Heart right ventricle (tissue), 16 donors: ENCODE measurements at regions of chr19 and their contacts with region 1.

Region 1: GRCh38 chr19:18388100-18388959 is 2.4 kb downstream of the GDF15 start:
- DNase-seq: peak; percentile 79 to 88
- ATAC-seq: peak; percentile 82 to 91 (median 90)
- H3K4me3 ChIP-seq: peak overlapping the region in 9 of 10 donors; percentile 17 to 52 (median 38)
- H3K27ac ChIP-seq: peak overlapping the region in 8 of 10 donors; percentile 9 to 73 (median 56)
- H3K4me1 ChIP-seq: peaks cover 0 to 46% (median 16%) of the 10 kb centered on the region in 9 donors
- H3K27me3 ChIP-seq: peaks cover 0 to 16% (median 0%) of the 10 kb centered on the region in 7 donors
- CTCF ChIP-seq: peak; percentile 97 to 100 (median 100)

Region 2: GRCh38 chr19:18340190-18340989 is 47.9 kb before region 1 on chr19 and contains the start of gene PGPEP1:
- intact Hi-C with region 1: loop called in 1 of 10 experiments (anchors 5 kb)
- DNase-seq: peak; percentile 82
- ATAC-seq: peak; percentile 77 to 90 (median 86)
- H3K4me3 ChIP-seq: peak within 1 kb of the TSS; percentile 63 to 97 (median 90)
- H3K27ac ChIP-seq: peak within 1 kb of the TSS; percentile 32 to 91 (median 85)
- H3K4me1 ChIP-seq: peaks cover 10 to 37% (median 21%) of the 10 kb centered on the region in 9 donors
- H3K27me3 ChIP-seq: no peaks in the 10 kb centered on the region
- CTCF ChIP-seq: no peak
- total RNA-seq, gene PGPEP1: 36.0 to 61.3 (median 46.8) TPM

Region 3: DNA sequence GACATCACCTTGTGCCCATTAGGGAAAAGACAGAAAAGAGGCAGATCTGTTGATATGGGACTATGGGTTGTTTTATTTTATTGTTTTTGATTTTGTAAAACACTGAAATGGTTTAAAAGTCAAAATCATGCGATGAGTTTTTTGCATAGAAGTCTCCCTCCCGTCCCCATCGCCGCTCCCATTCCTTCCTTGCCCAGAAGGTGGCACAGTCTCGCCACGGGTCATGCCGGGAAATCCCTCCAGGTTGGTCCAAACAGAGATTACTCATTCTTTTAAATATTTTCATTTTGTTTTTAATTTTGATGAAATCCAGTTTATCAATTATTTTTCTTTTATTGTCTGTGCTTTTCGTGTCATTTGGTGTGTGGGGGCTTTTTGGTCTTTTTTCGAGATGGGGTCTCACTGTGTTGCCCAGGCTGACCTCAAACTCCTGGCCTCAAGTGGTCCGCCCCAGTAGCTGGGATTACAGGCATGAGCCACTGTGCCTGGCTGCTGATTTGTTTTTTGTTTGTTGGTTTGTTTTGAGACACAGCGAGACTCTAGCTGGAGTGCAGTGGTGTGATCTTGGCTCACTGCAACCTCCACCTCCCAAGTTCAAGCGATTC is 38.7 kb before region 1 on chr19:
- intact Hi-C with region 1: loop called in 4 of 10 experiments (anchors 5 kb)
- DNase-seq: peak; percentile 48
- ATAC-seq: peak in 6 of 8 donors; percentile 53 to 71 (median 64)
- H3K4me3 ChIP-seq: no peak overlapping the region
- H3K27ac ChIP-seq: no peak overlapping the region
- H3K4me1 ChIP-seq: no peaks in the 10 kb centered on the region
- H3K27me3 ChIP-seq: no peaks in the 10 kb centered on the region
- CTCF ChIP-seq: peak; percentile 50 to 86 (median 76)

Region 4: DNA sequence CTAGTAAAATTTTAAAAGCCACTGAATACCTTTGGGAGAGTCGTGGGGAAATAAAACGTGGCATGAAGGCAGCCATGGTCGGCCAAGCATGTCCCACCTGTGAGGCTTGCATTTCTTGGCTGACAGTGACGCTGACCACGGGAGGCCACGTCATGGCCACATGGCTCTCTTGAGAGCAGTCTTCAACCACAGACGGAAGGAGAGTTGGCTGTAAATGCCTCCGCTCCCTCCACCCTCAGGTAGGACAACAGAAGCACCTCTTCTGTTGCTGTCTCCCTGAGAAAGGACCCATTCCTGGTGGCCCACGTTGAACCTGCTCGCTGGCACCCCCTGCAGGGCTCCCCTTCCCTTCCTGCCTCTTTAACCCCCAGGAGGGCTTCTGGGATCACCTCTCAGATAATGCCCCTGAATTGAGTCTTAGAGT is 19.7 kb after region 1 on chr19:
- intact Hi-C with region 1: loop called in 3 of 10 experiments (anchors 1 to 2 kb)
- DNase-seq: peak; percentile 8 to 58
- ATAC-seq: peak in 2 of 8 donors; percentile 24 to 46
- H3K4me3 ChIP-seq: no peak overlapping the region
- H3K27ac ChIP-seq: no peak overlapping the region
- H3K4me1 ChIP-seq: peaks cover 0 to 9% (median 0%) of the 10 kb centered on the region in 9 donors
- H3K27me3 ChIP-seq: no peaks in the 10 kb centered on the region
- CTCF ChIP-seq: peak in 7 of 9 donors; percentile 29 to 61 (median 46)